GM23248 (cell line): ENCODE measurements at regions of chr6 and their contacts with region 1.

Region 1: GRCh38 chr6:33014841-33015634 is 5.6 kb upstream of the HLA-DOA start:
- DNase-seq: peak; percentile 79
- H3K4me3 ChIP-seq: no peak overlapping the region
- H3K27ac ChIP-seq: no peak overlapping the region
- H3K4me1 ChIP-seq: no peaks in the 10 kb centered on the region
- H3K27me3 ChIP-seq: peaks cover 43% of the 10 kb centered on the region

Region 2: DNA sequence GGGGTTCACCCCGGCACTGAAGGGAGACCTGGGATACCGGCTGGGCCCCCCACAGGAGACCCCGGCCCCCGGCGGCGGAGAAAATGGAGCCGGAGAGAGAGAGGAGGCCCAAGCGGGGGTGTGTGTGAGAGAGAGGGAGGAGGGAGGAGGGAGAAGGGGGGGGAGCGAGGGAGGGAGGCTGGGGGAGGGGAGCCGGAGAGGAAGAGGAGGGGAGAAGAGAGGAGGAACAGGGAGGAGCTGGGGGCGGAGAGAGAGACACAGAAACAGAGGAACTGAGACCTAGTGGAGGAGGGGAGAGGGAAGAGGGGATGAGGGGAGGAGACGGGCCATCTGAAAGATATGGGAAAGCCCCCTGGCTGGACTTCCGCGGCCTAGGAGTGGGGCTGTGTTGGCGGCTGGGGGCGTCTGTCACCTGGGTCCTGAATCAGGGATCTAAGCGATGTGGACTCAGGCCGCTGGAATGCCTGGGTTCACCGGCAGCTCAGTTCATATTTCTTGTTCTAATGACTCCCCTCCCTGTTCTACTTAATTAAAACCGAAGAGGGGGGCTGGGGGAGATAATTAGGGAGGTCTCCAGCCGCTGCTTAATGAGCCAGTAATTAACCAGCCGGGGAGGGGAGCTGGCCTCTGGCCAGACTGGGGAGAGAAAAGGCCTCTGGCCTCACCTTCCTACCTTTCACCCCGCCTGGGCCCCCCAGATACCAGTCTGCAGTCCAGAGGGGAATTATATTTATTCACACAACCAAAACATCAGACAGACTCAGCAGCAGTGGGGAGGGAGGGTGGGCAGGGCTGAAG is 824.8 kb before region 1 on chr6 and contains the start of gene PBX2:
- in situ Hi-C with region 1: no loop called
- DNase-seq: peak; percentile 87
- H3K4me3 ChIP-seq: peak within 1 kb of the TSS; percentile 96
- H3K27ac ChIP-seq: peak within 1 kb of the TSS; percentile 77
- H3K4me1 ChIP-seq: peaks cover 25% of the 10 kb centered on the region
- H3K27me3 ChIP-seq: no peaks in the 10 kb centered on the region
- total RNA-seq, gene PBX2: 25.4 and 27.6 TPM in 2 replicates

Region 3: GRCh38 chr6:32774426-32774825 is 240.6 kb before region 1 on chr6:
- in situ Hi-C with region 1: no loop called
- DNase-seq: peak; percentile 28
- H3K4me3 ChIP-seq: no peak overlapping the region
- H3K27ac ChIP-seq: no peak overlapping the region
- H3K4me1 ChIP-seq: no peaks in the 10 kb centered on the region
- H3K27me3 ChIP-seq: peaks cover 30% of the 10 kb centered on the region

Region 4: GRCh38 chr6:33147807-33148666 is 133.0 kb after region 1 on chr6:
- in situ Hi-C with region 1: loop called (anchors 10 kb)
- DNase-seq: peak; percentile 74
- H3K4me3 ChIP-seq: no peak overlapping the region
- H3K27ac ChIP-seq: no peak overlapping the region
- H3K4me1 ChIP-seq: no peaks in the 10 kb centered on the region
- H3K27me3 ChIP-seq: peaks cover 19% of the 10 kb centered on the region

Region 5: GRCh38 chr6:33248925-33249731 is 234.1 kb after region 1 on chr6:
- in situ Hi-C with region 1: loop called (anchors 10 kb)
- DNase-seq: peak; percentile 100
- H3K4me3 ChIP-seq: peak overlapping the region; percentile 78
- H3K27ac ChIP-seq: peak overlapping the region; percentile 98
- H3K4me1 ChIP-seq: peaks cover 45% of the 10 kb centered on the region
- H3K27me3 ChIP-seq: no peaks in the 10 kb centered on the region